HAP-1 (cell line): ENCODE measurements at regions of chr11 and their contacts with region 1.

Region 1: DNA sequence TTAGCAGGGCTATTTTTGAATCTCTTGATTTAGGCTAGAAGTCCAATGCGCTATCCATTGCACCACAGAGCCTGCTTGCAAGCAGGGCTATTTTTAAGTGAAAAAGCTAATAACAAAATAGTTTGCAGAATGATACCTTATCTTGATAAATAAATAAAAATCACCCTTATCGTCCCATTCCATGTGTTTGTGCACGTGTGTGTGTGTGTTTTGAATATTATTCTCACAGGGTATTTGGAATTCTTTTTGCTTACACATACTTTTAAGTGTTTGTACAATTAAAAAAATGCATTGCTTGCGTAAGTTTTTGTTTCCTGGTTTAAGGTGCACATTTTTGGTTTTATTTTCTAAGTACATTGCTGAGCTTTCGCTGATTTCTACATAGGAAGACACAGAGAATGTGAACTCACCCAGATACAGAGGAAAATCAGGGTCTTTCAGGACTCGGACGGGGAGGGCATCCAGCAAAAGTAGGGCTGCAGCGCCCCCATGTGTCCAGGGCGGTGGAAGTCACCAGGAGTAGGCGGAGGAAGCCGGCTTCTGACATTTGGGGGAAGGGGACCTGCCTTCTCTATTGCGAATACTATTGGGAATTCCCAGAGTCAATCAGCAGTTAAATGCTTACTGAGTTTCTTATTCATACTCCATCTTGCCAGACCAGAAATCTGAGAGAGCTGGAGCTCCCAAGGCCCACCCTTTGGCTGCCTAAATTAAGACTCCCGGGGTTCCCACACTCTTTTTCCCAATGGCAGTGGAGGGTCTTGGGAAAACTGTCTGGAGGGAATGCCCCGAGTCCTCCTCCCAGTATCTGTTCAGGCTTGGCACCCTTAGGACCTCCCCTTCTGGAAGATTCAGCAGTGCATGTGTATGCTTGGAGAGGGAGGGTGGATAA is 27.2 kb downstream of the SLC1A2 start:
- DNase-seq: peak; percentile 51 to 92
- H3K4me3 ChIP-seq: no peak overlapping the region
- H3K4me1 ChIP-seq: peaks cover 6% of the 10 kb centered on the region
- H3K27me3 ChIP-seq: peaks cover 2% of the 10 kb centered on the region; the same call in 1 of the 2 replicates

Region 2: GRCh38 chr11:34174412-34175041 is 1217.6 kb before region 1 on chr11:
- in situ Hi-C with region 1: loop called (anchors 25 kb)
- DNase-seq: peak; percentile 46 to 90
- H3K4me3 ChIP-seq: peak overlapping the region; percentile 13
- H3K4me1 ChIP-seq: peaks cover 11% of the 10 kb centered on the region
- H3K27me3 ChIP-seq: no peaks in the 10 kb centered on the region

Region 3: DNA sequence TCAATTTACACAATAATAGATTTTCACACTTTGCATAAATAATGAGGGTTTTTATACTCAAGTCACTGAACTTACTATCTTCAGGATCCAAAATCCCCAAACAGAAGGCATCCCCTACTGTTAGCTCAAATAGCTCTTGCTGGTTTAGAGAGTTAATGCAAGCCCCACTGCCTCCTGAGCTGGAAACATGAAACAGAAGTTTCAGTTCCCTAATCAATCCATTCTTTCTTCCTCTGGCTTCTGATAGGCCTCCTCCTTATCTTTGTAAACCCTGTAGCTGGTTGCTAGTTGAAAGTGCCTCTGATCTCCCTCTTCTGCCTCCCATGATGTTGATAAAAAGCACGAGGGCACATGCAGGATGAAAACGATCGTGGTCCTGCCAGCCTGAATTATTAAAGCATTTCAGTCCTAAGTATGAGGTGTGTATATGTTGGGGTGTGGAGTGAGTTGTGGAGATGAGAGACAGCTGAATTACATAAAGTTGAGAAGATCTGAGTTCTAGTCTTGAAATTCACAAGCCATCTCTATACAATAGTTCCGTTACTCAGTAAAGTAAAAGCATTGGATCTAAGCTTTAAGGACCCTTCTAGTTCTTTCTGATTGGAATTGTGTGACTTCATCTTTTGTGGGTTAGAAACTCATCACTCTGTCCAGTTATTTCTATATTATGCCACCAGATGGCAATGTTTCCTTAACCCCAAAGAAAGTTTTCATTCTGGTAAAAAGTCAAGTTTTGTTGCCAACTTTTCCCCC is 806.3 kb before region 1 on chr11:
- in situ Hi-C with region 1: loop called (anchors 25 kb)
- DNase-seq: peak in 1 of 2 experiments; percentile 79
- H3K4me3 ChIP-seq: no peak overlapping the region
- H3K4me1 ChIP-seq: peaks cover 5% of the 10 kb centered on the region; the same call in 1 of the 2 replicates
- H3K27me3 ChIP-seq: no peaks in the 10 kb centered on the region

Region 4: GRCh38 chr11:34916015-34916842 is 475.9 kb before region 1 on chr11 and contains the starts of genes APIP and PDHX:
- in situ Hi-C with region 1: loop called (anchors 10 kb)
- DNase-seq: peak; percentile 88 to 100
- H3K4me3 ChIP-seq: peak within 1 kb of the TSS; percentile 87
- H3K4me1 ChIP-seq: peaks cover 8% of the 10 kb centered on the region
- H3K27me3 ChIP-seq: no peaks in the 10 kb centered on the region